Thyroid gland (tissue), 4 donors: ENCODE measurements at regions of chr16 and their contacts with region 1.

Region 1: GRCh38 chr16:69105489-69106361 is at the start of gene HAS3:
- DNase-seq: peak; percentile 82 to 85
- H3K4me3 ChIP-seq: peak within 1 kb of the TSS; percentile 17 to 64 (median 61)
- H3K27ac ChIP-seq: peak within 1 kb of the TSS; percentile 34 to 85 (median 63)
- H3K4me1 ChIP-seq: peaks cover 47% of the 10 kb centered on the region in 2 donors
- H3K27me3 ChIP-seq: no peaks in the 10 kb centered on the region
- CTCF ChIP-seq: peak in 4 of 6 experiments; percentile 38 to 47 (median 43)
- POLR2A ChIP-seq: peak; percentile 72 to 97
- total RNA-seq, gene HAS3: 3.5 to 9.1 (median 7.5) TPM

Region 2: GRCh38 chr16:68902008-68902968 is 203.4 kb before region 1 on chr16:
- intact Hi-C with region 1: loop called (anchors 5 kb)
- DNase-seq: peak; percentile 62 to 69
- H3K4me3 ChIP-seq: no peak overlapping the region
- H3K27ac ChIP-seq: peak overlapping the region; percentile 18 to 62 (median 54)
- H3K4me1 ChIP-seq: peaks cover 4 to 15% of the 10 kb centered on the region in 2 donors
- H3K27me3 ChIP-seq: no peaks in the 10 kb centered on the region
- CTCF ChIP-seq: peak; percentile 19 to 91 (median 79)
- POLR2A ChIP-seq: no peak